ENCODE measurements at regions of chr1 and their contacts with region 1.

Region 1: GRCh38 chr1:41977326-41977725 is 58.6 kb upstream of the HIVEP3 start:
- DNase-seq: no peak
- ATAC-seq: no peak

Region 2: GRCh38 chr1:41599912-41600311 is 377.4 kb before region 1 on chr1:
- intact Hi-C with region 1: no loop called
- DNase-seq: no peak
- ATAC-seq: no peak

Region 3: DNA sequence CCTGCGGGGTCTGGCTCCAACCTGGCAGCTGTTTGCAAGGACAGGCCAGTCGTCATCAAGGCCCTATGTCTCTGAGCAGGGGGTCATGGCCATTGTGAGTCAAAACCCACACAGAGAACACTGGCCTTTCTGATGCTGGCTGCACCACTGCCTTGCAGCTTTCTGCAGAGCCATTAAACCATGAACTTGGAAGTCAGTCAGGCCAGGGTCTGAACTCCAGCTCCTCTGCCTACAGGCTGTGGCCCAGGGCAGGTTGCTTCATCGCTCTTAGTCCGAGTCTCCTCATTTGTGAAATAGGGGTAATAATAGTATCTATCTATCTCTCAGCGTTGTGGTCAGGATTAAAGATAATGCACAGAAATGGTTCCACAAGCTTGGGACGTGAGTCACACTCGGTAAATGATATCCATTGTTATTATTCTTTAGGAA is 22.8 kb before region 1 on chr1:
- intact Hi-C with region 1: loop called (anchors 1 kb)
- DNase-seq: no peak
- ATAC-seq: peak; percentile 51

Region 4: DNA sequence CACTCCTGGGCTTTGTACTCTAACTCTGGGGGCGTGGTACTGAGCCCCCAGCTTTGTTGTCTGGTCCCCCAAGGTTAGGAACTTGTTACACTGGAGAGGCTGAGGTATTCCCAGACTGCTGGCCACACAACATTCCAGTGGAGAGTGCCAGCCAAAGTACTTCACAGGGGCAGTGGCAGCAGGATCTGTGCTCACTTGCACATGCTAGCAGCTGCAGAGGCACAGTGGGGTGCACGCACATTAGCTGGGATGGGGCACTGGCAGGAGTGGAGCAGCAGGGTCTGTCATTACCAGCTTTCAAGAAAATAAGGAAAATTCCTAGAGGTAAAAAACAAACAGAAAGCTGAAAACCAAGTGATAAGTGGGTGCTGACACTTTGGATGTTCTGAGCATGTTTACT is 900.1 kb after region 1 on chr1:
- intact Hi-C with region 1: no loop called
- DNase-seq: no peak
- ATAC-seq: no peak